ENCODE measurements at regions of chr5 and their contacts with region 1.

Region 1: GRCh38 chr5:152560512-152561137 is 155.5 kb upstream of the NMUR2 start:
- DNase-seq: peak; percentile 68
- ATAC-seq: peak; percentile 33 to 63

Region 2: DNA sequence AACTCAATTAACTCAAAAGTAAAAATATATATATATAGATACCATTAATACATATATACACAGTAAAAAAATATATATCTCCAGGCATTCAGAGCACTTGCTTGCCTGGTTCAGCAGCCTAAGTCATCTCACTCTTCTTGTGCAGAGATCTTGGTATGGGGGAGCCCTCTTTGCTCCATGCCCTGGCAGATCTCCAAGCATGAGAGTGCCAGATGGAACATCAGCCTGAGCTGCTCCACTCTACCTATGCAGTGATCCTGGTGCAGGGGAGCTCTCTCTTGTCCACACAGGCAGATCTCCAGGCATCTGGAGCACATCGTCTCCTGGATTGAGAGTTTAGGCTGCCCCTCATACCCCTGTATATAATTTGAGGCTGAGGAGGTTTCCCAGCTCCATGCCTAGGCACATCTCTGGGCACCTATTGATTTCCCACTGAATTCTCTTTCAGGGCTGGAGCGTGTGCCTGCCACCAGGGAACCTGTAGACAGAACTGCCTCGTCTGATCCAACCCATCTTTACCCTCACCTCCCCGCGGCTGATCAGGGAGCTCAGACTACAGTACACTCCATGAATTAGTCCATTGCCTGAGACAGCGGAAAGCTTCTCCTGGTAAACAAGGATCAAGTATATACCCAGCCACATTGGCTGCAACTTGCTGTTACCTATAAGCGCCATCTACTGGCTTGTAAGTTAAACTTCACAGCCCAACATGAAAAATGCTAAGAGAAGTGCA is 587.4 kb after region 1 on chr5:
- intact Hi-C with region 1: loop called (anchors 2 kb)
- DNase-seq: no peak
- ATAC-seq: peak; percentile 41 to 70

Measured in left cardiac atrium (tissue), 4 donors.